Left ventricle myocardium inferior (tissue), 1 donor: ENCODE measurements at regions of chr9 and their contacts with region 1.

Region 1: GRCh38 chr9:98255578-98256296 is at the start of gene TBC1D2:
- DNase-seq: peak; percentile 97
- H3K4me3 ChIP-seq: peak within 1 kb of the TSS; percentile 84
- H3K27ac ChIP-seq: peak within 1 kb of the TSS; percentile 98
- H3K4me1 ChIP-seq: peaks cover 37% of the 10 kb centered on the region
- H3K27me3 ChIP-seq: no peaks in the 10 kb centered on the region
- CTCF ChIP-seq: peak; percentile 28
- total RNA-seq, gene TBC1D2: 1.7 TPM

Region 2: GRCh38 chr9:97966493-97966892 is 289.2 kb before region 1 on chr9:
- intact Hi-C with region 1: no loop called
- DNase-seq: no peak
- H3K4me3 ChIP-seq: no peak overlapping the region
- H3K27ac ChIP-seq: no peak overlapping the region
- H3K4me1 ChIP-seq: peaks cover 16% of the 10 kb centered on the region
- H3K27me3 ChIP-seq: peaks cover 16% of the 10 kb centered on the region
- CTCF ChIP-seq: no peak

Region 3: GRCh38 chr9:98074115-98074990 is 181.4 kb before region 1 on chr9:
- intact Hi-C with region 1: loop called (anchors 10 kb)
- DNase-seq: peak; percentile 38
- H3K4me3 ChIP-seq: no peak overlapping the region
- H3K27ac ChIP-seq: peak overlapping the region; percentile 24
- H3K4me1 ChIP-seq: peaks cover 21% of the 10 kb centered on the region
- H3K27me3 ChIP-seq: no peaks in the 10 kb centered on the region
- CTCF ChIP-seq: peak; percentile 94

Region 4: DNA sequence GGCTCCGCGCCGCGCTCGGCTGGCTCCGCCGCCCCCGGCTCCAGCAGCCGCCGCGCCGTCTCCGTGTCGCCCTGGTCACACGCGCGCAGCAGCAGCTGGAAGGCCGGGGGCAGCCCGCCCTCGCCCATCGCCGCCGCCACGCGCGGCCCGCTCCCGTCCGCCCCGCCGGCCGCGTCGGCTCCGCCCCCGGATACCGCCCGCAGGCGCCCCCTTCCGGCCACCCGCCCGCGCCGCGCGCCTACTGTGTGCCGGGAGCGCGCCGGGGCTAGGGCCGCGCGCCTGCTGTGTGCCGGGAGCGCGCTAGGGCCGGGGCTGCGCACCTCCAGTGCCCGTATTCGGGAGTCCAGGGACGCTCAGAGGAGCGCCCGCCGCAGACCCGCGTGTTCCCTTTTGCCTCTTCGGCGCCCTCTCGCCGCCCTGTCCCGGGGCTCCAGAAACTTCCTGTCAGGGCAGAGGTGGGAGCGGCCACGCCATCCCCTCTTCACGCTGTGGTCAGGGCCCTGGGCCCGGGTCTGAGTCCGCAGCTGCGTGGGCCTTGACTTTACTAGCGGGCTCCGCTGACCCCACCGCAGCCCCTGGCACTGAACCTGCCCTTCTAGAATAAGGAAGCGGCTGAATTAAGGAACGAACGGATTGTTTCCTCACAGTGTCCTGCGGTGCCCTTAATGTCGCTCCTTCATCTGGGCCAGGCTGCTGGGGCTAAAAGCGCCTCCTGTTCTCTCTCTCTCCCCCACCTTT is 540.8 kb after region 1 on chr9 and contains the start of gene ANKS6:
- intact Hi-C with region 1: no loop called
- DNase-seq: peak; percentile 81
- H3K4me3 ChIP-seq: peak within 1 kb of the TSS; percentile 78
- H3K27ac ChIP-seq: peak within 1 kb of the TSS; percentile 73
- H3K4me1 ChIP-seq: peaks cover 25% of the 10 kb centered on the region
- H3K27me3 ChIP-seq: no peaks in the 10 kb centered on the region
- CTCF ChIP-seq: peak; percentile 63
- total RNA-seq, gene ANKS6: 4.8 TPM